ENCODE measurements at regions of chr20 and their contacts with region 1.

Region 1: DNA sequence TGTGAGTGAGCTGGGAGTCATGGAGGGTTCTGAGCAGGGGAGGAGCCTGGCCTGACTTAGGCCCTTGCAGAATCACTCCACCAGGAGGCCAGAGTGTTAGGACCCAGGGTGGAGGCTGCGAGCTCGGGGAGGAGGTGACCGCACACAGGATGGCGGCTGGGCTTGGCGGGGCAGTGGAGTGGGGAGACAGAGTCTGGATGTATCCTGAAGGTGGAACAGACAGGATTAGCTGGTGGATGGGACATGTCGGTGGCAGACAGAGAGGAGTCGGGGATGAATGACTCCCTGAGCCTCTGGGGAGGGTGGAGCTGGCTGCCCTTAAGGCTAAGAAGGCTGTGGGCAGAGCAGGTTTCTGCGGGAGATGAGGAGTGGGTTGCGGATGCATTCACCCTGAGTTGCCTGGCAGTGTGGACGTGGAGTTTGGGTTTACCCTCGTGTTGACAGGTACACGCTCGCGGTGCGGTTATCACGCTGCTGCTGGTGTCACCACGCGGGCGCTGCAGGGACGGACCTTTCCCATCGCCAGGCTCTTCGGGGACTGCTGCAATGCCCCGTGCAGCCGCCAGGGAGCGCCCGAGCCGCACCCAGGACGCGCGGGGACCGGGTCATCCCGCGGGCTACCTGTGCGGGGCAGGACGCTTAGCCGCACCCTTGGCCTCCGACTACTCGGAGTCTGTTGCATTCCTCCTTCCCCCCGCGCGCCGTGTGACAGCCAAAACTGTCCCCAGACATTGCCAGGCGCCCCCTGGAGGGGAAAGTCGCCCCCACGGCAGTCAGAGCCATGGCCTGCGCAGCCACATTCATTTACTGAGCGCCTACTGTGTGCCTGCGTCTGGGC is 43.0 kb upstream of the PTGIS start:
- DNase-seq: peak; percentile 79 to 92
- ATAC-seq: peak; percentile 88
- H3K4me3 ChIP-seq: no peak overlapping the region
- H3K27ac ChIP-seq: no peak overlapping the region
- H3K4me1 ChIP-seq: no peaks in the 10 kb centered on the region
- H3K27me3 ChIP-seq: no peaks in the 10 kb centered on the region

Region 2: GRCh38 chr20:49330544-49331239 is 280.2 kb before region 1 on chr20:
- intact Hi-C with region 1: loop called (anchors 2 to 5 kb)
- DNase-seq: no peak
- ATAC-seq: no peak
- H3K4me3 ChIP-seq: no peak overlapping the region
- H3K27ac ChIP-seq: no peak overlapping the region
- H3K4me1 ChIP-seq: no peaks in the 10 kb centered on the region
- H3K27me3 ChIP-seq: no peaks in the 10 kb centered on the region

Region 3: DNA sequence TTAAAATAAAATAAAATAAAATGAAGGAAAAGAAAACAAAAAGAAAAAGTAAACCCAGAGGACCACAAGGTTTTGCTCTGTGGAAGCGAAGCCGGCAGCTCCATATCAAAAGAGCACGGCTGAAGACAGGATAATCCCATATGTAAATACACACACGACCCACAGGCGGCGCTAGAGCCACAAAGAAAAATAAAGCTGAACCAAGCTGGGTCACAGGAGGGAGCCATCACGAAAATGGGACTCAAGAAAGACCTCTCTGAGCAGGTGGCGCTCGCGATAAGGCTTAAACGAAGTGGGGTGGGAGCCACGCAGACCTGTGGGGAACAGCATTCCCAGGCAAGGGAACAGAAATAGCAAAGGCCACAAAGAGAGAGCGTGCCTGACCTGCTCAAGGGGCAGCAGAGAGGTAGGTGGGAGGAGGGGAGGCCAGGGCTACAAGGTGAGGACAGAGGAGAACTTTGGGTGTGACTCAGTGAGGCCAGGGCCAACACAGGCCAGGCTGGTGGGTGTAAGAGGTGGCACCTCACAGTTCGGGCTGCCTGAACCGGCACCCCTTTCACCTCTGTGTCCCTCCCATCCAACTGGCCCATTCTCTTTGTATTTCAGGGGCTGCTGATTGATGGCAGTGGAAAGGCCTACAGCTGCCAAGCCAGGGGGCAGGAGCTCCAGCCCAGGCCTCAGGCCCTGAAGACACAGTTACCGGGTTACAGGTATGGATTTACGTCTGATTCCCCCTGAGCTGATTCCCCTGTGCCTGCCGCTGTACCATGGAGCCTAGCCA is 69.0 kb before region 1 on chr20:
- intact Hi-C with region 1: loop called (anchors 1 kb)
- DNase-seq: peak; percentile 74 to 90
- ATAC-seq: peak; percentile 86
- H3K4me3 ChIP-seq: no peak overlapping the region
- H3K27ac ChIP-seq: peak overlapping the region in 1 of 2 donors; percentile 0
- H3K4me1 ChIP-seq: no peaks in the 10 kb centered on the region
- H3K27me3 ChIP-seq: no peaks in the 10 kb centered on the region

Region 4: DNA sequence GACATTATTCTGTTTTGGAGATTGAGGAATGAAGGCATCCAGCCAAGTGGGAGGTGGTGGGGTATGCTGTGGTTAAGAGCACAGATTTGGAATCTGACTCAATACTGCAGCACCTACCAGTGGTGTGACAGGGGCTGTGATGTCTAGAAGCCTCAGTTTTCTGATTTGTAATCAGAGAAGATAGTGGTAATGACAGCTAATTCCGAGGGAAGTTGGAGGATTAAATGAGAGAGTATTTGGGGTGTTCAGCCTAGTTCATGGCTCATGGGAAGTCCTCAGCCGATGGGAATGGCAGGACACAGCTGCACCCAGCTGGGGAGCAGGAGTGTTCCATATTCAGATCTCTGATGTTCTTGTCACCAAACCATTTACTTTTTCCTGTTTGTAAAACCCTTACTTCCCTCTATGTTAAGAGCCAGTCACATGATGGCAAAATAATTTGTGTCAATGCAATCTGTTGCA is 211.0 kb after region 1 on chr20:
- intact Hi-C with region 1: loop called (anchors 2 to 5 kb)
- DNase-seq: no peak
- ATAC-seq: no peak
- H3K4me3 ChIP-seq: no peak overlapping the region
- H3K27ac ChIP-seq: no peak overlapping the region
- H3K4me1 ChIP-seq: no peaks in the 10 kb centered on the region
- H3K27me3 ChIP-seq: no peaks in the 10 kb centered on the region

Region 5: GRCh38 chr20:49853640-49854039 is 242.7 kb after region 1 on chr20:
- intact Hi-C with region 1: loop called in 1 of 2 experiments (anchors 5 kb)
- DNase-seq: peak in 1 of 2 donors; percentile 69
- ATAC-seq: peak; percentile 35
- H3K4me3 ChIP-seq: no peak overlapping the region
- H3K27ac ChIP-seq: peak overlapping the region in 1 of 2 donors; percentile 69
- H3K4me1 ChIP-seq: peaks cover 3 to 14% of the 10 kb centered on the region in 2 donors
- H3K27me3 ChIP-seq: no peaks in the 10 kb centered on the region

Region 6: GRCh38 chr20:49928401-49929141 is 317.7 kb after region 1 on chr20:
- intact Hi-C with region 1: loop called (anchors 2 to 5 kb)
- DNase-seq: peak; percentile 85 to 90
- ATAC-seq: peak; percentile 81
- H3K4me3 ChIP-seq: no peak overlapping the region
- H3K27ac ChIP-seq: peak overlapping the region in 1 of 2 donors; percentile 43
- H3K4me1 ChIP-seq: no peaks in the 10 kb centered on the region
- H3K27me3 ChIP-seq: no peaks in the 10 kb centered on the region